GM12878 (cell line): ENCODE measurements at regions of chr18 and their contacts with region 1.

Region 1: DNA sequence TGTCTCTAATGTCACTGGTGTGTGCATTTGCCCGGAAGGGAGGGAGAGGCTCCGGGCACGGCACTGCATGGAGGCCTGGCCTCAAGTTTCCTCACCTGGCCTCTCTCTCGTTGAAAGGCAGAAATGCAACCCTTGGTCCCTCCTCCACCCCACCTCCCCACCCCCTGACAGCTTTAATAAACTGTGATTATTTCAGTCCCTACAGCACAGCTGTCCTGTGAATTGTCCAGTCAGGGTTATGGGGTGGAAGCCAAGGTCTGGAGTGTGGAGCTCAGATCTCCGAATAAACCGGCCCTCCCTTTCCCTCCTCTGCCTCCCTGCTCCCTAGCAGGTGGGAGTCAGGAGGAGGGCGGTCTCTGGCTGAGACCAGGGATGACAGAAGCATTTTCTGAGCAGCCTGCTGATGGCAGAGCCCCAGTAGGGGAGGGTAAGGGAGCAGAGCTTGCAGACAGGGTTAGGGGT is 199.2 kb upstream of the SMAD2 start:
- DNase-seq: no peak
- ATAC-seq: no peak
- H3K4me3 ChIP-seq: no peak overlapping the region
- H3K27ac ChIP-seq: no peak overlapping the region
- H3K4me1 ChIP-seq: no peaks in the 10 kb centered on the region
- H3K27me3 ChIP-seq: peaks cover 0 to 2% of the 10 kb centered on the region in 2 experiments; a peak in 3 of 4 replicates
- CTCF ChIP-seq: no peak
- EP300 ChIP-seq: no peak
- POLR2A ChIP-seq: no peak
- RAD21 ChIP-seq: no peak

Region 2: GRCh38 chr18:48178997-48179396 is 49.3 kb after region 1 on chr18:
- CTCF ChIA-PET with region 1: no interaction called
- POLR2A ChIA-PET with region 1: no interaction called
- RAD21 ChIA-PET with region 1: no interaction called
- SMC1A ChIA-PET with region 1: no interaction called
- in situ Hi-C with region 1: no loop called
- intact Hi-C with region 1: loop called (anchors 5 kb)
- DNase-seq: no peak
- ATAC-seq: no peak
- H3K4me3 ChIP-seq: no peak overlapping the region
- H3K27ac ChIP-seq: no peak overlapping the region
- H3K4me1 ChIP-seq: no peaks in the 10 kb centered on the region
- H3K27me3 ChIP-seq: peaks cover 0 to 2% of the 10 kb centered on the region in 2 experiments; a peak in 2 of 4 replicates
- CTCF ChIP-seq: no peak
- EP300 ChIP-seq: no peak
- POLR2A ChIP-seq: no peak
- RAD21 ChIP-seq: no peak

Region 3: DNA sequence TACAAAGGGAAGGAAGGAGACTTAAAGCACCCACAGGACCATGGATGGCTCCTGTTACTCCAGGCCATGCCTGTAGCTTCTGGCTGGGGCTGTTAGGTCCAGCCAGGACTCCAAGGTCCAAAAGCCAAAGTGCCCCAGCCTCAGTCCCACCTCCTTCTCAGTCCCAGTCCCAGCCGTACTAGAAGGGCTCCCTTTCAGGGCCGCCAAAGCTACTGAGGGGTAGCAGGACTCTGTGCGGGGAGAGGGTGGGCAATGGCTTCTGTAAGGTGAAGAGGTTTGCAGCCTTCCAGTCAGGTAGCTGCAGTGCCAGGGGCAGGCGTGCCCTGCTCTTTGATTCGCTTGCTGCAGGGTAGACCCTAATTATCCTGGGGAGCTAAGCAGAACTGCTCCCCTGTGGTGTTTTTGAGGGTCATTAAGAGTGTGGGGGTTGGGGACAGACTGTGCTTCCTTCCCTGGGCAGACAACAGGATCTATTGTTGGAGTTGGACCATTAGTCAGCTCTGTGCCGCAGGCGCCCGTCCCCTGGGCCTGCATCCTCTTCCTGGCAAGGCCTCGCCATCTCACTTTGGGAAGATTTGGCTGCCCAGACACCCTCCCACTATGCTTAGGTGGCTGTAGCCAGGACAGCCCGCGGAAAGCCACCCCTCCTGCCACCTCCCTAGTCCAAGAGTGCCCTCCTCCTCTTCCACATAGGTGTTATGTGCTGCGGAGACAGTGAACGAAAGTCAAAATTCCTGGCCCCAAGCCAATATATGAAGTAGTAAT is 160.7 kb after region 1 on chr18:
- CTCF ChIA-PET with region 1: no interaction called
- POLR2A ChIA-PET with region 1: no interaction called
- RAD21 ChIA-PET with region 1: no interaction called
- SMC1A ChIA-PET with region 1: no interaction called
- in situ Hi-C with region 1: no loop called
- intact Hi-C with region 1: no loop called
- DNase-seq: no peak
- ATAC-seq: no peak
- H3K4me3 ChIP-seq: no peak overlapping the region
- H3K27ac ChIP-seq: no peak overlapping the region
- H3K4me1 ChIP-seq: no peaks in the 10 kb centered on the region
- H3K27me3 ChIP-seq: no peaks in the 10 kb centered on the region
- CTCF ChIP-seq: no peak
- EP300 ChIP-seq: no peak
- POLR2A ChIP-seq: no peak
- RAD21 ChIP-seq: no peak

Region 4: DNA sequence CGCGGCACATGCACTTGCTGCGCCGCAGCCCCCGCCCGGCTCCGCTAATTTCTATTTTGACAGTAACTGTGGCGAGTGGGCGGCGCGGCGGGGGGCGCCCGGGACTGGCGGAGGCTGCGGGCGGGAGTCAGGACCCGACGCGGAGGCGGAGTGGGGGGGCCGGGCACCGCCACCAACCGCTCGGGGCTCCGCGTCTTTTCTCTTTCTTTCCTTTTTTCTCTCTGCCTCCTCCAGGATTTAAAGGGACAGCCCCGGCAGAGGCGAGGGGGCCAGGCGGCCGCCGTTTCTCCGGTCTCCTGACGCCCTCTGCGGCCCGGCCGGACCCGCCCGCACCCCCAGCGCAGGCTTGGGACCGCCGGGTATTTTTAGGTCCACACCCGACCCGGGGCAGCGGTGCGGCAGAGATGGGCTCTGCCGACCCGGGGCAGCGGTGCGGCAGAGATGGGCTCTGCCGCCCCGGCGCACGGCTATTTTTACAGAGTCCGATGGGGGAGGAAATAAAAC is 280.0 kb after region 1 on chr18:
- CTCF ChIA-PET with region 1: no interaction called
- POLR2A ChIA-PET with region 1: no interaction called
- RAD21 ChIA-PET with region 1: no interaction called
- SMC1A ChIA-PET with region 1: no interaction called
- in situ Hi-C with region 1: no loop called
- intact Hi-C with region 1: no loop called
- DNase-seq: no peak
- ATAC-seq: peak; percentile 9; the same call in 2 of the 3 replicates
- H3K4me3 ChIP-seq: peak overlapping the region; percentile 69
- H3K27ac ChIP-seq: no peak overlapping the region
- H3K4me1 ChIP-seq: no peaks in the 10 kb centered on the region
- H3K27me3 ChIP-seq: peaks cover 11 to 16% of the 10 kb centered on the region in 2 experiments
- CTCF ChIP-seq: no peak
- EP300 ChIP-seq: no peak
- POLR2A ChIP-seq: no peak
- RAD21 ChIP-seq: no peak